ENCODE measurements at regions of chr10 and their contacts with region 1.

Region 1: DNA sequence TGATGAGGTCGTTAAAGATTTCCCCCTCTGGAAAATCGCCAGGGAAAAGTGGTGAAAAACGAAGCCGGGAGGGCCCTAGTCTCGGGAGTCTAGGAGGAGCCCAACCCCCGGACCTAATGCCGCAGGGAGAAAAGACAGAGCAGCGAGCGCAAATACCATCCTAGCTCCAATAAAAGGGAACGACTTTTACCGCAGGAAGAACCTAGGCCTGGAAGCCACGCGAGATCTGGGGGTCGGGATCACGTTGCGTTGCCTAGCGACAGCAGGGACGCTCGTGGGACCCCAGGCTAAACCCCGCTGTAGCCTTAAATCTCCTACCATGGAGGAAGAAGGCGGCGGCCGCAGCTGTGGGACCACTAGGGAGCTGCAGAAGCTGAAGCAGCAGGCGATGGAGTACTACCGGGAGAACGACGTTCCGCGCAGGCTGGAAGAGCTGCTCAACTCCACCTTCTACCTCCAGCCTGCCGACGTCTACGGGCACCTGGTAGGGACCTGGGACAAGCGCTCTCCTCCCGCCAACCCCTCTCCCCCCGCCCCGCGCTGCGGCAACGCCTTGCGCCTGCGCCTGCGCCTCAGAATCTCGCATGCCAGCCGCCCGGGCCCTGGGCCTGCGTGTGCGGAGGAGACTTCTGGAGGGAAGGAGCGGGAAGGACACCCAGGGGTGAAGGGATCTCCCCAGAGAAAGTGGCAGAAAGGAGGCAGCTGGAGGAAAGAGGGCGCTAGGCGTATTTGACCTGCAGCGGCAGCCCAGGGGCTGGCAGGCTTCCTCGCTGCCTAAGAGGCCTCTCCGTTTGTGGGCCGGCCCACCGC is at the start of gene ENO4:
- DNase-seq: peak; percentile 69
- ATAC-seq: peak; percentile 86
- H3K4me3 ChIP-seq: peak within 1 kb of the TSS; percentile 93
- H3K27ac ChIP-seq: peak within 1 kb of the TSS; percentile 18; the same call in 1 of the 2 replicates
- H3K4me1 ChIP-seq: peaks cover 7% of the 10 kb centered on the region
- H3K27me3 ChIP-seq: no peaks in the 10 kb centered on the region
- CTCF ChIP-seq: no peak
- total RNA-seq, gene ENO4: 0.35 TPM in 1 of 2 replicates, not detected in the other

Region 2: GRCh38 chr10:116809483-116810119 is 39.9 kb before region 1 on chr10:
- CTCF ChIA-PET with region 1: no interaction called
- POLR2A ChIA-PET with region 1: interaction called, 32 read pairs
- intact Hi-C with region 1: no loop called
- DNase-seq: no peak
- ATAC-seq: no peak
- H3K4me3 ChIP-seq: no peak overlapping the region
- H3K27ac ChIP-seq: no peak overlapping the region
- H3K4me1 ChIP-seq: no peaks in the 10 kb centered on the region
- H3K27me3 ChIP-seq: no peaks in the 10 kb centered on the region
- CTCF ChIP-seq: peak; percentile 38; the same call in 1 of the 2 replicates

Region 3: GRCh38 chr10:116888380-116889055 is 39.1 kb after region 1 on chr10:
- CTCF ChIA-PET with region 1: no interaction called
- POLR2A ChIA-PET with region 1: no interaction called
- intact Hi-C with region 1: loop called (anchors 1 kb)
- DNase-seq: peak; percentile 82
- ATAC-seq: peak; percentile 83
- H3K4me3 ChIP-seq: no peak overlapping the region
- H3K27ac ChIP-seq: peak overlapping the region; percentile 80
- H3K4me1 ChIP-seq: peaks cover 62% of the 10 kb centered on the region
- H3K27me3 ChIP-seq: no peaks in the 10 kb centered on the region
- CTCF ChIP-seq: no peak

Region 4: GRCh38 chr10:117047947-117048346 is 198.5 kb after region 1 on chr10:
- CTCF ChIA-PET with region 1: no interaction called
- POLR2A ChIA-PET with region 1: no interaction called
- intact Hi-C with region 1: no loop called
- DNase-seq: no peak
- ATAC-seq: no peak
- H3K4me3 ChIP-seq: no peak overlapping the region
- H3K27ac ChIP-seq: no peak overlapping the region
- H3K4me1 ChIP-seq: no peaks in the 10 kb centered on the region
- H3K27me3 ChIP-seq: no peaks in the 10 kb centered on the region
- CTCF ChIP-seq: no peak